ENCODE measurements at regions of chr4 and their contacts with region 1.

Region 1: GRCh38 chr4:81471588-81472288 is at the start of gene RASGEF1B:
- DNase-seq: peak; percentile 93
- H3K4me3 Mint-ChIP-seq: peak within 1 kb of the TSS; percentile 86
- H3K27ac Mint-ChIP-seq: peak within 1 kb of the TSS; percentile 91
- H3K4me1 Mint-ChIP-seq: peaks cover 31% of the 10 kb centered on the region
- H3K27me3 Mint-ChIP-seq: no peaks in the 10 kb centered on the region
- total RNA-seq, gene RASGEF1B: 6.5 to 6.7 TPM

Region 2: GRCh38 chr4:81454499-81454898 is 17.2 kb before region 1 on chr4:
- CTCF ChIA-PET with region 1: interaction called, 11 read pairs
- intact Hi-C with region 1: no loop called
- DNase-seq: peak; percentile 76
- H3K4me3 Mint-ChIP-seq: no peak overlapping the region
- H3K27ac Mint-ChIP-seq: peak overlapping the region; percentile 68
- H3K4me1 Mint-ChIP-seq: peaks cover 19% of the 10 kb centered on the region
- H3K27me3 Mint-ChIP-seq: no peaks in the 10 kb centered on the region

Region 3: DNA sequence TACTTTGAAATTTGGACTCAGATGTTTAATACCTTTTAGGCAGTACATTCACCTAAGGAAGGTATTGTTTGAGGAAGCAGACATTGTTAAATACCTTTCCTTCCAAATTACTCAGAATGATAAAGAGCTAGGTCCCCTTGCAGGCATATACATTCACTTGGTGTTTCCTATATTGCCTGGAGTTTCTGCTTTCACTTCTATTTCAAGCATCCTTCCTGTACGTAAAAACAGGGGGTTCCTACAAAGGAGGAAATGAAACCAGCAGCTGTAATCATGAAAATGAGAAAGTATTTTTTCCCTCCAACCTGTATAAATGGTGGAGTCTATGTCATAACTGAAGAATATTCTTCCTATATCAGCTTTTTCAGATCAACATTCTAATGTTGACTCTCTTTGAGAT is 90.4 kb after region 1 on chr4:
- CTCF ChIA-PET with region 1: no interaction called
- intact Hi-C with region 1: loop called (anchors 1 kb)
- DNase-seq: no peak
- H3K4me3 Mint-ChIP-seq: no peak overlapping the region
- H3K27ac Mint-ChIP-seq: no peak overlapping the region
- H3K4me1 Mint-ChIP-seq: peaks cover 21% of the 10 kb centered on the region
- H3K27me3 Mint-ChIP-seq: no peaks in the 10 kb centered on the region

Region 4: GRCh38 chr4:81688085-81688484 is 216.3 kb after region 1 on chr4:
- CTCF ChIA-PET with region 1: interaction called, 12 read pairs
- intact Hi-C with region 1: loop called (anchors 1 kb)
- DNase-seq: peak; percentile 17
- H3K4me3 Mint-ChIP-seq: no peak overlapping the region
- H3K27ac Mint-ChIP-seq: no peak overlapping the region
- H3K4me1 Mint-ChIP-seq: no peaks in the 10 kb centered on the region
- H3K27me3 Mint-ChIP-seq: no peaks in the 10 kb centered on the region

Region 5: GRCh38 chr4:81881855-81882621 is 410.3 kb after region 1 on chr4:
- CTCF ChIA-PET with region 1: no interaction called
- intact Hi-C with region 1: no loop called
- DNase-seq: no peak
- H3K4me3 Mint-ChIP-seq: no peak overlapping the region
- H3K27ac Mint-ChIP-seq: no peak overlapping the region
- H3K4me1 Mint-ChIP-seq: peaks cover 5% of the 10 kb centered on the region
- H3K27me3 Mint-ChIP-seq: peaks cover 9% of the 10 kb centered on the region

Region 6: GRCh38 chr4:81919238-81919637 is 447.5 kb after region 1 on chr4:
- CTCF ChIA-PET with region 1: interaction called, 4 read pairs
- intact Hi-C with region 1: loop called (anchors 1 kb)
- DNase-seq: no peak
- H3K4me3 Mint-ChIP-seq: no peak overlapping the region
- H3K27ac Mint-ChIP-seq: no peak overlapping the region
- H3K4me1 Mint-ChIP-seq: peaks cover 6% of the 10 kb centered on the region
- H3K27me3 Mint-ChIP-seq: peaks cover 11% of the 10 kb centered on the region

Region 7: GRCh38 chr4:82284858-82285805 is 813.4 kb after region 1 on chr4:
- CTCF ChIA-PET with region 1: no interaction called
- intact Hi-C with region 1: loop called (anchors 1 kb)
- DNase-seq: peak; percentile 100
- H3K4me3 Mint-ChIP-seq: peak overlapping the region; percentile 73
- H3K27ac Mint-ChIP-seq: no peak overlapping the region
- H3K4me1 Mint-ChIP-seq: peaks cover 12% of the 10 kb centered on the region
- H3K27me3 Mint-ChIP-seq: no peaks in the 10 kb centered on the region

Measured in activated naive CD4-positive, alpha-beta T cell treated with anti-CD3 and anti-CD28 coated beads for 36 hours (primary cell).